A673 (cell line): ENCODE measurements at regions of chr18 and their contacts with region 1.

Region 1: GRCh38 chr18:24322584-24323136 is 75.0 kb downstream of the OSBPL1A start:
- DNase-seq: no peak
- H3K4me3 ChIP-seq: no peak overlapping the region
- H3K27ac ChIP-seq: no peak overlapping the region
- H3K4me1 ChIP-seq: no peaks in the 10 kb centered on the region
- H3K27me3 ChIP-seq: no peaks in the 10 kb centered on the region
- CTCF ChIP-seq: no peak

Region 2: DNA sequence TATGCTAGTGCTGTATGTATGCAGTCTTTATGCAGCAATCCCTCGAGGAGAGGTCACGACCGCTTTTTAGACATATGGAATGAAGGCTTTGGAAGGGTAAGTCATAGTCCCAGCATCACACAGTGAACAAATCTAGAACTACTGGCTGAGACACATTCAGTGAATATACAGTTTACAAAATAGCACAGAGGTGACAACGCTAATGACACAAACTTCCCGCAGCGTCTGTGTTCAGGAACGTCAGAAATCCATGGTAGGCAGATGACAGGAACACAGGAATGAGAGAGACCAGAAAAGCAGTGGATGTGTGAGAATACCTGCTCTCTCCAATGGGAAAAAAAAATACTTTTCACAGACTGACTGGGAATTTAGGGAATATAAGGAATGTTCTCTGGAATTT is 154.2 kb before region 1 on chr18:
- CTCF ChIA-PET with region 1: no interaction called
- POLR2A ChIA-PET with region 1: interaction called, 13 read pairs
- intact Hi-C with region 1: no loop called
- DNase-seq: no peak
- H3K4me3 ChIP-seq: no peak overlapping the region
- H3K27ac ChIP-seq: no peak overlapping the region
- H3K4me1 ChIP-seq: no peaks in the 10 kb centered on the region
- H3K27me3 ChIP-seq: no peaks in the 10 kb centered on the region
- CTCF ChIP-seq: no peak